ENCODE measurements at regions of chr11 and their contacts with region 1.

Region 1: GRCh38 chr11:14454861-14455632 is 44.6 kb downstream of the COPB1 start:
- DNase-seq: no peak
- H3K4me3 ChIP-seq: no peak overlapping the region
- H3K27me3 ChIP-seq: no peaks in the 10 kb centered on the region
- CTCF ChIP-seq: peak; percentile 59

Region 2: GRCh38 chr11:14269692-14270573 is 185.1 kb before region 1 on chr11:
- CTCF ChIA-PET with region 1: interaction called, 5 read pairs
- POLR2A ChIA-PET with region 1: interaction called, 22 read pairs
- DNase-seq: no peak
- H3K4me3 ChIP-seq: no peak overlapping the region
- H3K27me3 ChIP-seq: no peaks in the 10 kb centered on the region
- CTCF ChIP-seq: no peak

Region 3: DNA sequence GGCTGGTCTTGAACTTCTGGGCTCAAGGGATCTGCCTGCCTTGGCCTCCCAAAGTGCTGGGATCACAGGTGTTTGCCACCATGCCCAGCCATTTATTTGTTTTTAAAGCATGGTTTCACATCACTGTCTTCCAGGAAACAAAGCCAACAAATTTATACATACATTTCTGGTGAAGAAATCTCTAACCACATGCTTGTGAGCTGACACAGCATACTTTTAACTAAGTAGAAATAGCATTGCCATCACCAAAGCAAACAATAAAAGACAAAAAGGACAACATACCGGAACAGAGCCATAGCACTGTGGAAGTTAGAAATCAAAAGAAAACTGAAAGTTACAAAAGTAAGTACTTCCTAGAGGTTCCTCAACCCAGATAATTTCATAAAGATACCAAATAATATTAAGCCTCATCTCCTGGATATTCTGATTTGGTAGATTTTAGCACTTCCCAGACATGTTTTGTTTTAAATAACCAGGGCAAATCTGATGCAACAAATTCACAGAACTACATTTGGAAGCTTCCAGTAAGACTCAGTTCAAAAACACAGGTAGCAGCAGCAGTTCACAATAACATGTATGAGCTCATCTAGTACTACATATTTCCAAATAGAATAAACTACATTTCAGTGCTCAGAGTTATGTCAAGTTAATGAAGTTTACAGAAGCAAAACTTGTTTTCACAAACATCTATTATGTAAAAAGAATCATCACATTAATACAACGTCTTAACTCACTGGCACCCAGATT is 166.7 kb before region 1 on chr11:
- CTCF ChIA-PET with region 1: interaction called, 10 read pairs
- POLR2A ChIA-PET with region 1: no interaction called
- DNase-seq: peak; percentile 74
- H3K4me3 ChIP-seq: 0 out of 2 replicates have a peak overlapping the region, but pooled peaks have one; percentile 1
- H3K27me3 ChIP-seq: no peaks in the 10 kb centered on the region
- CTCF ChIP-seq: no peak

Region 4: DNA sequence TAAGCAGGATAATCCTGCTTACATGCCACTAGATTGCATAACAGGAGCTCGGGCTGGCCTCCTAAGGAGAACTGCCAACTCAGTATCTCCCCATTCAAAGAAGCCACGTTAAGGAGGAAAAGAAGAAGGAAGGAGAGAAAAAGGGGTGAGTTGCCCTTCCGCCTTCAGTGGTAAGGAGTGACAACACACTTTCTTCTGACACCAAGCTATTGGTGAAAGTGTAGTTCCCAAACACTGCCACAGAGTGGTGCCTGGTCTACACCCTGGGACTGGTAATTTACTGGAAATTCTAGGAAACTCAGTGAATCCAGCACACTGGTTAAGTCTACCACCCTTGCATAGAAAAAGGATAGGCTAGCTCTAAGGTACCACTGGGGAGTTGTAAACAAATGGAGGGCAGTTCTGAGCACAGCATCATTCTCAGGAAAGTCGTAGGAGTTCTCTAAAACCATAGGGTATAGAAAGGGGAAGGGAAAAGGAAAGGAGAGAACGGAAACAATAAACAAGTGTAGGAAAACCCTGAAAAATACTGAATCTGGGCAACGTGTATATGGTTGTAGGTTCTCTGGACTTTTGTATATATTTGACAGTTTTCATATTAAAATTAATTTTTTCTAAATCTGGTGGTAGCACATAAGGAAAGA is 154.3 kb before region 1 on chr11:
- CTCF ChIA-PET with region 1: interaction called, 118 read pairs
- POLR2A ChIA-PET with region 1: interaction called, 4 read pairs
- DNase-seq: no peak
- H3K4me3 ChIP-seq: no peak overlapping the region
- H3K27me3 ChIP-seq: no peaks in the 10 kb centered on the region
- CTCF ChIP-seq: peak; percentile 79

Region 5: GRCh38 chr11:14308114-14308896 is 146.7 kb before region 1 on chr11:
- CTCF ChIA-PET with region 1: interaction called, 118 read pairs
- POLR2A ChIA-PET with region 1: interaction called, 3 read pairs
- DNase-seq: no peak
- H3K4me3 ChIP-seq: no peak overlapping the region
- H3K27me3 ChIP-seq: no peaks in the 10 kb centered on the region
- CTCF ChIP-seq: peak; percentile 69

Region 6: DNA sequence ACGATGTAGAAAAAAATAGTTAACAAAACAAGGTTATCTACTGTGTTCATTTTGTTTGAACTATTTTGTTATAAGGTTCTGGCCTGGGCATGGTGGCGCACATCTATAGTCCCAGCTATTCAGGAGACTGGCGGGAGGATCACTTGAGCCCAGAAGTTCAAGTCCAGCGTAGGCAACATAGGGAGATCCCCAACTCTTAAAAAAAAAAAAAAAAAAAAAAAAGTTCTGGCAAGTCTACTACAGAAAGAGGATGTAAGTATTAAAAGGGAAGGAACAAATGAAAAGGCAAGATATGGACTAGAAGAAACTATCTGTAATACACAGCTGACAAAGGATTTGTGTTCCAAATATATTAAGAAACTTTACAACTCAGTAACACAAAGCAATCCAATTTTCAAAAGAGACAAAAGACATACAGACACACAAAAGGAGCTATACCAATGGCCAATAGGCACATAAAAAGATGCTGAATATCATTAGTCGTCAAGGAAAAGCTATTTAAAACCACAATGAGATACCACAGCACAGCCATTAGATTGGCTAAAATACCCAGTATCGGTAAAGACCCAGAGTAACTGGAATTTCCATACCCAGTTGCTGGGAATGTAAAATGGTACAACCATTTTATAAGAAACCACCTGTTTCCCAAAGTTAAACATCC is 123.4 kb before region 1 on chr11:
- CTCF ChIA-PET with region 1: interaction called, 5 read pairs
- POLR2A ChIA-PET with region 1: interaction called, 13 read pairs
- DNase-seq: no peak
- H3K4me3 ChIP-seq: no peak overlapping the region
- H3K27me3 ChIP-seq: no peaks in the 10 kb centered on the region
- CTCF ChIP-seq: no peak

Region 7: DNA sequence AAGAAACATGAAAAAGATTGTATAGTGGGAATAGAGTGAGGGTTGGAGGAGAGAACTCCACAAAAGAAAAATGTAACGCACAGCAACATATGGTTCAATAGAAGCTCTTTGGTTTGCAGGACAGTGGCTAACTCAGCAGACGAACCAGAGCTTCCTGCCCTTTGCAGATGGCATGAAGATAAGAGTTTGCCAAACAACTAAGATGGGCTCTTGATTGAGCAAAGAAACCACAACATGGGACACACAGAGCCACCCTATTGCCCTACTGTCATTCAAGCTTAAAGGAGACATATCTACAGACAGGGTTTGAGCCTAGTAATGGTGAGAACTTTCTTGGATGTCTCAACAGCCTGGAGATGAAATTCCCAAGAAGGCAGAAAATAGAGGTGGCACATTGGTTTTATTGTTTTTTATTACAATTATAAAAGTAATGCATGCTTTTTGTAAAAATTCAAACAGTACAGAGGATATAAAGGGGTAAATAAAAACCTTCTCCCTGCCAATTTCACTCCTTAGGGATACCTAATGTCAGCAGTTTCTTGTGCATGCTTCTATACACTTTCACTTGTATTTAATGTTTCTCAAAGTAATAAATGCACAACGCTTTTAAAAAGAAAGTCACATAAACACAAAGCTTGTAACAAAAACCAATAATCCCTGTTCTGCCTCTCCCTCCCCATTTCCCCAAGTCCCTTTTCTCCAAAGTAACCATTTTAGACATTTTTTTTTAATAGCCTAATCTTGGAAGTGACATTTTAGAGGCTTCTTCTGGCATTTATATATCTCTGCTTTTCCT is 19.1 kb before region 1 on chr11:
- CTCF ChIA-PET with region 1: no interaction called
- POLR2A ChIA-PET with region 1: no interaction called
- DNase-seq: no peak
- H3K4me3 ChIP-seq: no peak overlapping the region
- H3K27me3 ChIP-seq: no peaks in the 10 kb centered on the region
- CTCF ChIP-seq: no peak

Region 8: GRCh38 chr11:14471127-14471526 is 16.1 kb after region 1 on chr11:
- CTCF ChIA-PET with region 1: interaction called, 22 read pairs
- POLR2A ChIA-PET with region 1: no interaction called
- DNase-seq: no peak
- H3K4me3 ChIP-seq: no peak overlapping the region
- H3K27me3 ChIP-seq: no peaks in the 10 kb centered on the region
- CTCF ChIP-seq: no peak

Measured in BJ (cell line).